Activated CD4-positive, alpha-beta memory T cell treated with anti-CD3 and anti-CD28 coated beads for 36 hours (primary cell): ENCODE measurements at regions of chr22 and their contacts with region 1.

Region 1: GRCh38 chr22:39985383-39986035 is 9.2 kb upstream of the FAM83F start:
- DNase-seq: peak; percentile 26
- H3K4me3 Mint-ChIP-seq: no peak overlapping the region
- H3K27ac Mint-ChIP-seq: no peak overlapping the region
- H3K4me1 Mint-ChIP-seq: peaks cover 3% of the 10 kb centered on the region
- H3K27me3 Mint-ChIP-seq: no peaks in the 10 kb centered on the region

Region 2: DNA sequence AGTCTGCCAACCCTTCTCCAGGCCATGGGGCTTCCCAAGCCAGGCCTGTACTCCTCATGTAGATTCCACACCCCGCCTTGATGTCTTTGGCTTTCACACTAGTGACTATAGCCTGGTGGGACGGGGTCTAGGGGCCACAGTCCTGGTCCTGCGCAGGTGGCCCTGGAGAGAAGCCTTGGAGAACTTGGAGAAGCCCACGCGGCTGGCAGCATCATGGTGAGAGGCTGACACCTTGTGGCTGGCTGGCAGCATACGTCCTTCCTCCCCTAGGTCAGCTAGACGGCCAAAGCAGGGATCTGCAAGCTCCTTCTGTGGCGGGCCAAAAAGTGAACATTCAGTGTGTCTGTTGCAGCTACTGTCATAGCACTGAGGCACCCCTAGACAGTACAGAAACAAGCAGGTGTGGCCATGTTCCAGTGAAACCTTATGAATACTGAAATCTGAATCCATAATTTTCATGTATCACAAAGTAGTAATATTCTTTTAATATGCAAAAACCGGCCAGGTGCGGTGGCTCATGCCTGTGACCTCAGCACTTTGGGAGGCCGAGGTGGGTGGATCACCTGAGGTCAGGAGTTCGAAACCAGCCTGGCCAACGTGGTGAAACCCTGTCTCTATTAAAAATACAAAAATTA is 51.2 kb after region 1 on chr22:
- CTCF ChIA-PET with region 1: no interaction called
- POLR2A ChIA-PET with region 1: no interaction called
- intact Hi-C with region 1: loop called (anchors 1 kb)
- DNase-seq: peak; percentile 76
- H3K4me3 Mint-ChIP-seq: no peak overlapping the region
- H3K27ac Mint-ChIP-seq: no peak overlapping the region
- H3K4me1 Mint-ChIP-seq: no peaks in the 10 kb centered on the region
- H3K27me3 Mint-ChIP-seq: peaks cover 10% of the 10 kb centered on the region